ENCODE measurements at regions of chr3 and their contacts with region 1.

Region 1: GRCh38 chr3:138397983-138398382 is 36.4 kb upstream of the ESYT3 start:
- DNase-seq: no peak
- H3K4me3 ChIP-seq: no peak overlapping the region
- H3K4me3 Mint-ChIP-seq: no peak overlapping the region
- H3K27ac Mint-ChIP-seq: no peak overlapping the region
- H3K4me1 ChIP-seq: peaks cover 30% of the 10 kb centered on the region
- H3K4me1 Mint-ChIP-seq: peaks cover 32% of the 10 kb centered on the region
- H3K27me3 ChIP-seq: no peaks in the 10 kb centered on the region
- H3K27me3 Mint-ChIP-seq: no peaks in the 10 kb centered on the region
- CTCF ChIP-seq: no peak

Region 2: GRCh38 chr3:138051946-138052802 is 345.8 kb before region 1 on chr3:
- CTCF ChIA-PET with region 1: no interaction called
- POLR2A ChIA-PET with region 1: no interaction called
- intact Hi-C with region 1: no loop called
- DNase-seq: peak in 1 of 2 experiments; percentile 64
- H3K4me3 ChIP-seq: no peak overlapping the region
- H3K4me3 Mint-ChIP-seq: no peak overlapping the region
- H3K27ac Mint-ChIP-seq: no peak overlapping the region
- H3K4me1 ChIP-seq: no peaks in the 10 kb centered on the region
- H3K4me1 Mint-ChIP-seq: no peaks in the 10 kb centered on the region
- H3K27me3 ChIP-seq: no peaks in the 10 kb centered on the region
- H3K27me3 Mint-ChIP-seq: peaks cover 2% of the 10 kb centered on the region
- CTCF ChIP-seq: peak; percentile 63 to 82

Region 3: DNA sequence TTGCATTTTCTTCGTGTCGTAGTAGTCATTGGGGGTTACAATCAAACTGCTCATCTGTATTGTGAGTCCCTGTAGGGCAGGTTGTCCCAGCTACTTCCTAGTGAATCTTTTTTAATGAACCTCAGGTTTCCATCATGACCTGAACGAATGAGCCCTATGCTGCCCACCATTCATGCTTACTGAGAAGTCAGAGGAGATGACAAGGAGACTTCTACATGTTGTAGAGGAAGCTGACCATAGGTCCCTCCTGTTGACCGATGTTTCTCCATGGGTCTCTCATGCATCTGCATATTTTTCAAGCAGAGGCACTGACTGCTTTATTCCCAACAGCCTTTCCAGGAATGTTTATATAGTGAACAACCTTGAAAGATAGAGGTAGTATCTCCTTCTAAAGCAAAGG is 63.4 kb before region 1 on chr3:
- CTCF ChIA-PET with region 1: no interaction called
- POLR2A ChIA-PET with region 1: no interaction called
- intact Hi-C with region 1: loop called (anchors 2 kb)
- DNase-seq: no peak
- H3K4me3 ChIP-seq: no peak overlapping the region
- H3K4me3 Mint-ChIP-seq: no peak overlapping the region
- H3K27ac Mint-ChIP-seq: no peak overlapping the region
- H3K4me1 ChIP-seq: peaks cover 10% of the 10 kb centered on the region
- H3K4me1 Mint-ChIP-seq: no peaks in the 10 kb centered on the region
- H3K27me3 ChIP-seq: no peaks in the 10 kb centered on the region
- H3K27me3 Mint-ChIP-seq: no peaks in the 10 kb centered on the region
- CTCF ChIP-seq: no peak

Region 4: DNA sequence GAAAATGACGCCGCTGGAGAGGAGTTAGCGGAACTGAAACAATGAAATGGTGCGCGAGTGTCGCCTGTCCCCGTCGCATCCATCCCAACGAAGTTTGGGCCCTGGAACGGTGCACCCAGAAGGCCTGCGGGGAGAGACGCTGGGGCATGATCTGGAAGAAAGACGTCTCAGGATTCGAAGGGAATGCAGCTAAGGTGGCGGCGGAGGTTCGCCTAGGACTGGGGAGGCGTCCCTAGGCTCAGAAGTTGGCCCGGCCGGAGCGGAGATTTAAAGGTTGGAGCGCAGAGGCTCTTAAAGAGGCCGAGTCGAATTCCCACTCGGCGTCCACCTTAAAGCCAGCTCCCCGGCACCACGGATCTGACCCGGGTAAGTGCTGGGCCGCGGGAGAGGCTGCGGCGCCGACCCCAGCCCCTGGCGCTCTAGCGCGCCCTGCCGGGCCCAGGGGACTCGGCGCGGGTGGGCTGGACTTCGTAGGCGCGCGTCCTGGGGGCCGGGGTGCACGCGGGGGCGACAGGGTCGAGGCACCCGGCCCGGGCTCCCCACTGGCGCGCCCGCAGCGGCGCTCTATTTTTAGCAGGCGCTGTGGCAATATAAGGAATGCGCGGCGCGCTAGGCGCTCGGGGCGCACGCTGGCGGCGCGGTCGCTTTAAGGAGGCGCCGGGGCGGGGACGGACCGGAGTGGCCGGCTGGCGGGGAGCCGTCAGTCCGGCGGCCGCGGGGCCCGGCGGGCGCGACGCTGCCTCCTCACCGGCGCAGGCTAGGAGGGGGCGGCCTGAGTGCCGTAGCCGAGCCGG is 49.8 kb before region 1 on chr3 and contains the start of gene MRAS:
- CTCF ChIA-PET with region 1: interaction called, 7 read pairs
- POLR2A ChIA-PET with region 1: no interaction called
- intact Hi-C with region 1: loop called (anchors 2 kb)
- DNase-seq: peak; percentile 78 to 85
- H3K4me3 ChIP-seq: peak within 1 kb of the TSS; percentile 48
- H3K4me3 Mint-ChIP-seq: peak within 1 kb of the TSS; percentile 93
- H3K27ac Mint-ChIP-seq: peak within 1 kb of the TSS; percentile 93
- H3K4me1 ChIP-seq: no peaks in the 10 kb centered on the region
- H3K4me1 Mint-ChIP-seq: peaks cover 6% of the 10 kb centered on the region
- H3K27me3 ChIP-seq: no peaks in the 10 kb centered on the region
- H3K27me3 Mint-ChIP-seq: no peaks in the 10 kb centered on the region
- CTCF ChIP-seq: peak; percentile 49 to 55
- total RNA-seq, gene MRAS: 8.5 and 11.4 TPM in 2 replicates

Region 5: DNA sequence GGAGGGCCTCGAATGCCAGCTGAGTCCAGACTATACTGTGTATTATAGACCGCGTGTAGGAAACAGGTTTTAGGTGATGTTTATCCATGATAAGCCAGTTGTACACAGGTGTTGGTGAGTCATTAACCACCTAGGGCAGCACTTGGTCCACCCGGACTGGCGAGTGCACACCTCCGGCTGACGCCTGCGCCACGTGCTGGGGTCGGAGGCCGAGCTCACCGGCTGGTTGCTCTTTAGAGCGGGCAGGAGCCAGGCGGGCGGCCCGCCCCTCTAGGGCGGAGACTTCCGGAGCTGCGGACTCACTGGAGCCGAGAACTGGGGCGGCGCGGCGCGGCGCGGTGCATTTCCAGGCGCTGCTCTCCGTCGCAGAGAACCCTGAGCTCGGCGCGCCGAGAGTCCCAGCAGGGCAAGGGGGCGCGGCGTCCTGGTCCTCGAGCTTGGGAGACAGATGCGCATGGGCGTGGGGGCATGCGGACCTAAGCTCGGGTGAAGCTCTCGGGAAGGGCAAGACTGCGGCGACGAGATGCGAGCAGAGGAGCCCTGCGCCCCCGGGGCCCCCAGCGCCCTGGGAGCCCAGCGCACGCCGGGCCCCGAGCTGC is 36.4 kb after region 1 on chr3 and contains the start of gene ESYT3:
- CTCF ChIA-PET with region 1: interaction called, 10 read pairs
- POLR2A ChIA-PET with region 1: interaction called, 3 read pairs
- intact Hi-C with region 1: loop called (anchors 2 kb)
- DNase-seq: peak; percentile 94 to 95
- H3K4me3 ChIP-seq: peak within 1 kb of the TSS; percentile 78
- H3K4me3 Mint-ChIP-seq: peak within 1 kb of the TSS; percentile 80
- H3K27ac Mint-ChIP-seq: peak within 1 kb of the TSS; percentile 42
- H3K4me1 ChIP-seq: peaks cover 12% of the 10 kb centered on the region
- H3K4me1 Mint-ChIP-seq: peaks cover 7% of the 10 kb centered on the region
- H3K27me3 ChIP-seq: no peaks in the 10 kb centered on the region
- H3K27me3 Mint-ChIP-seq: no peaks in the 10 kb centered on the region
- CTCF ChIP-seq: no peak
- total RNA-seq, gene ESYT3: 5.7 and 7.6 TPM in 2 replicates

Measured in Caco-2 (cell line).